Transverse colon (tissue), 4 donors: ENCODE measurements at regions of chr2 and their contacts with region 1.

Region 1: GRCh38 chr2:46351750-46352138 is 54.5 kb downstream of the EPAS1 start:
- DNase-seq: peak; percentile 54
- H3K4me3 ChIP-seq: no peak overlapping the region
- H3K27ac ChIP-seq: peak overlapping the region; percentile 28 to 51 (median 42)
- H3K4me1 ChIP-seq: peaks cover 0 to 8% (median 0%) of the 10 kb centered on the region in 4 donors
- H3K27me3 ChIP-seq: no peaks in the 10 kb centered on the region
- CTCF ChIP-seq: no peak
- EP300 ChIP-seq: no peak
- POLR2A ChIP-seq: no peak

Region 2: DNA sequence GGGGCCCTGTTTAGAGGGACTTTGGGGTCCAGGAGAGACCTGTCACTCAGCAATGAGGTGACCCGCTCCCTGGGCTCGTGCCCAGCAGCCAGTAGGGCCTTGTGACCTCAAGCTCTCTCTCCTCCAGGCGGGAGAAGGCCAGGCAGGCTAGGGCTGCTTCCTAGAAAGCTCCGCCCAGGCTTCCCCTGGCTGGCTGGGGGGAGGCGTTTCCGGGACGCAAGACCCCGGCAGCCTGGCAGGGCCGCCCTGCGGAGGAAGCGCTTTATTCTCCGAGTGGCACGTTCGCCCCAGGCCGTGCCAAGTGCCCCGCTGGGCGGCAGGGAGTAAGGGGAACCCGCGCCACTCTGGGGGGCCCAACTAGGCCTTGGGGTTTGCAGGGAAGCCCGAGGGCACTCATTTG is 75.8 kb before region 1 on chr2:
- in situ Hi-C with region 1: no loop called
- intact Hi-C with region 1: no loop called
- DNase-seq: peak; percentile 31
- H3K4me3 ChIP-seq: no peak overlapping the region
- H3K27ac ChIP-seq: peak overlapping the region; percentile 8 to 46 (median 36)
- H3K4me1 ChIP-seq: peaks cover 0 to 7% (median 0%) of the 10 kb centered on the region in 4 donors
- H3K27me3 ChIP-seq: no peaks in the 10 kb centered on the region
- CTCF ChIP-seq: no peak
- EP300 ChIP-seq: no peak
- POLR2A ChIP-seq: no peak

Region 3: GRCh38 chr2:46296840-46297545 is 54.8 kb before region 1 on chr2 and contains the start of gene EPAS1:
- in situ Hi-C with region 1: no loop called
- intact Hi-C with region 1: loop called (anchors 10 kb)
- DNase-seq: peak; percentile 96
- H3K4me3 ChIP-seq: peak within 1 kb of the TSS; percentile 51 to 86 (median 71)
- H3K27ac ChIP-seq: peak within 1 kb of the TSS; percentile 88 to 92 (median 90)
- H3K4me1 ChIP-seq: peaks cover 0 to 38% (median 23%) of the 10 kb centered on the region in 4 donors
- H3K27me3 ChIP-seq: no peaks in the 10 kb centered on the region
- CTCF ChIP-seq: peak in 1 of 5 experiments; percentile 0
- EP300 ChIP-seq: no peak
- POLR2A ChIP-seq: peak; percentile 87
- total RNA-seq, gene EPAS1: 102 to 260 (median 167) TPM